A673 (cell line): ENCODE measurements at regions of chr7 and their contacts with region 1.

Region 1: DNA sequence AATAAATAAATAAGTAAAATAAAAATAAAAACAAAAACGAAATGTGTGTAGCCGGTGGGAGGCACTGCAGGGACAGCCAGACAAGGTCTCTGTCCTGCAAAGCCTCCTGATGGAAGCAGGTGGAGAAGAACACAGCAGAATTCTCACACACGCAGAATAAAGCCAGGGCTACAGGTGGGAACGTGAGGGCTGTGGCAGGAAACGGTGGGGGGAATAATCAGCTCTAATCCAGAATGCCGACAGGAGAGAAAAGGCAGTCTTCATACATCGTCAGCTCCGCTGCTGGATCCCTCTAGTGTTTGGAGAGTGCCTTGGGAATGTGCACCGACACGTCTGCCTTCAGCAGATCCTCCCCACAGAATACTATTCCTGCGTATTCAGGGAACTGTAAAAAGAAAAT is 6.8 kb upstream of the SNX8 start:
- DNase-seq: no peak
- H3K4me3 ChIP-seq: no peak overlapping the region
- H3K27ac ChIP-seq: no peak overlapping the region
- H3K4me1 ChIP-seq: no peaks in the 10 kb centered on the region
- H3K27me3 ChIP-seq: no peaks in the 10 kb centered on the region
- CTCF ChIP-seq: no peak

Region 2: DNA sequence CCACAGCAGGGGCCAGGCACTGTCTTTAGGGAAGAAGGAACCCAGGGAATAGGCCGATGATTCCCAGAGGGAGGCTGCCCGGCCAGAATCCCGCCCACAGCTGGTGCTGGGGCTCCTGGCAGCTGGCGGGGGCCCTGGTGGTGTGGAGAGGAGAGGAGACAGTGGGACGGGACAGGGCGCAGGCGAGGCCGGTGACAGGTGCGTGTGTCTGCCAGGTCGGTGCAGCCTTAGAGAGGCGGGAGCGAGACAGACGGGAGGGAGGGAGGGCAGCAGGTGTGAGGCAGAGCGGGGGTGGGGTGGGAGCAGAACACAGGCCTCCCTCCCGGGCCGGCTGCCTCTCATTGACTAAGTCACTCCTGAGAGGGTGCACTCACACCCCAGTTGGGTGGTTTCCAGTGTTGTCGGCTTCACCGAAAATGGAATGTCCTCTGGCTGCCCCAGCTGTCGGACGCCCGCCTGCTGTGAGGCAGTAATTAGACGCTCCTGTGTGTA is 595.8 kb before region 1 on chr7:
- CTCF ChIA-PET with region 1: no interaction called
- POLR2A ChIA-PET with region 1: no interaction called
- intact Hi-C with region 1: no loop called
- DNase-seq: peak; percentile 48
- H3K4me3 ChIP-seq: no peak overlapping the region
- H3K27ac ChIP-seq: no peak overlapping the region
- H3K4me1 ChIP-seq: no peaks in the 10 kb centered on the region
- H3K27me3 ChIP-seq: no peaks in the 10 kb centered on the region
- CTCF ChIP-seq: no peak

Region 3: DNA sequence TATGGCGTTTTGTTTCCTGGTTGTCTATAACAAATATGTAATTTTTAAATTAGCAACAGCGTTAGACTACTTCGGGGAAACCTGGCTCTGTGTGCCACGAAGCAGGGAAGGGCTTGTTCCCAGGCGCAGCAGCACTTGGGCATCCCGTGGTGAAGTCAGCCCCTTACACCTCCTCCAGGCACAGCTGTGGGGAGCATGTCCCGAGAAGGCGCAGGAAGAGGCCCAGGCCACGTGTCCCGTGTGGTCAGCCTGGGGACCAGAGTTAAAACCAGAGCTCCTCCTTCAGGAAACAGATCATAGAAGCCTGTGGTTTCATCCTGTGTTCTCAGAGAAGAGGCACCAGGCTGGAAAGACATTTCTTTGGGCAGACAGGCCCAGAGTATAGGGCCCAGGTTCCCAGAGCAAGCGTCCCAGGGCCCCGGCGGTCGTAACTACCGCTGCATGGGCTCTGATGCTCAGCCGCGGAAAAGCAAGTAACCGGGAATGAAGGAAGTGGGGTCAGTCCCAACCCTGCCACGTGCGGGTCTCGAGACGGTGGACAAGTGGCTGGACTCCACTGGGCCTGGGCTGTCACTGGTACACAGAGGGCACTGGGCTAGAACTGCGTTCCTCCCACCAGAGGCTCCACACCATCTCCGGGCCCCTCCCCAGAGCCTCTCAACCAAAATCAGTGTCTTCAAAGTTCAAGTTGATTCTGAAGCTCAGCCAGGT is 71.9 kb before region 1 on chr7:
- CTCF ChIA-PET with region 1: no interaction called
- POLR2A ChIA-PET with region 1: interaction called, 10 read pairs
- intact Hi-C with region 1: no loop called
- DNase-seq: no peak
- H3K4me3 ChIP-seq: no peak overlapping the region
- H3K27ac ChIP-seq: no peak overlapping the region
- H3K4me1 ChIP-seq: no peaks in the 10 kb centered on the region
- H3K27me3 ChIP-seq: no peaks in the 10 kb centered on the region
- CTCF ChIP-seq: no peak